ENCODE measurements at regions of chr1 and their contacts with region 1.

Region 1: DNA sequence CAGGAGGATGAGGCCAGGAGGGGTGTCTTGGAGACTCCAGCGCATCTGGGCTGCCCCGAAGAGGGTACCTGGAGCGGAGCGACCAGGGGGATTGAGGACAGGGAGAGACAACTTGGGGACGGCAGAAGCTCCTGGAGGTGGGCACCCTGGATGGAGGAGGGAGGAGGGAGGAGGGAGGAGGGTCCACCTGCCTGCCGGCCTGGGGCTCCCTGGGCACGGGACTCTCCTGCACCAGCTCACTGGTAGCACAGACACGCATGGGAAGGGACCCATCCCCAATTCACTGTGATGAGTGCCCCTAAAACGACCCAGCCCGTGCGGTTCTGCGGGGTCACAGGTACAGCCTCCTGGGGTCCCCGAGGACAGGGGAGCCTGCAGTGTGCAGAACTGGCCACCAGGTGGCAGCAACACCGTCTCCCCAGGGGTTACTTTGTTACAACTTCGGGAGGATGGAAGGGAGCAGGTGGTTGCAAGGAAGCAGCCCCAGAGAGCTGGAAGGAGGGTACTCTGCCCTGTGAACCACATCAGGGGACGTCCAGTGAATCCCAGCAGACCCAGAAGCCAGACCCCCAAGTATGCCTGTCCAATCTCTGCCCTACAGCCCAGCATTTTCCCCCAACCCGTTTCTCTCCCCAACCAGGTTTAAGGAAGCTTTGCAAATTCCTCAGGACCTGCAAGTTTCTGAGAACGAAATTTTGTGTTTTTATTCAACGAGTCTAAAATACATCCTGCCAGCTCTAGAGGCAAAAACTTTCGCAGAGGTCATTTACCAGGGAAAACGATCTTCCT is 482.4 kb downstream of the NPHP4 start:
- H3K4me3 ChIP-seq: no peak overlapping the region
- H3K27ac ChIP-seq: no peak overlapping the region
- H3K4me1 ChIP-seq: no peaks in the 10 kb centered on the region
- CTCF ChIP-seq: peak; percentile 70

Region 2: GRCh38 chr1:5329068-5329739 is 180.7 kb before region 1 on chr1:
- CTCF ChIA-PET with region 1: no interaction called
- POLR2A ChIA-PET with region 1: no interaction called
- H3K4me3 ChIP-seq: no peak overlapping the region
- H3K27ac ChIP-seq: no peak overlapping the region
- H3K4me1 ChIP-seq: no peaks in the 10 kb centered on the region
- CTCF ChIP-seq: no peak

Region 3: DNA sequence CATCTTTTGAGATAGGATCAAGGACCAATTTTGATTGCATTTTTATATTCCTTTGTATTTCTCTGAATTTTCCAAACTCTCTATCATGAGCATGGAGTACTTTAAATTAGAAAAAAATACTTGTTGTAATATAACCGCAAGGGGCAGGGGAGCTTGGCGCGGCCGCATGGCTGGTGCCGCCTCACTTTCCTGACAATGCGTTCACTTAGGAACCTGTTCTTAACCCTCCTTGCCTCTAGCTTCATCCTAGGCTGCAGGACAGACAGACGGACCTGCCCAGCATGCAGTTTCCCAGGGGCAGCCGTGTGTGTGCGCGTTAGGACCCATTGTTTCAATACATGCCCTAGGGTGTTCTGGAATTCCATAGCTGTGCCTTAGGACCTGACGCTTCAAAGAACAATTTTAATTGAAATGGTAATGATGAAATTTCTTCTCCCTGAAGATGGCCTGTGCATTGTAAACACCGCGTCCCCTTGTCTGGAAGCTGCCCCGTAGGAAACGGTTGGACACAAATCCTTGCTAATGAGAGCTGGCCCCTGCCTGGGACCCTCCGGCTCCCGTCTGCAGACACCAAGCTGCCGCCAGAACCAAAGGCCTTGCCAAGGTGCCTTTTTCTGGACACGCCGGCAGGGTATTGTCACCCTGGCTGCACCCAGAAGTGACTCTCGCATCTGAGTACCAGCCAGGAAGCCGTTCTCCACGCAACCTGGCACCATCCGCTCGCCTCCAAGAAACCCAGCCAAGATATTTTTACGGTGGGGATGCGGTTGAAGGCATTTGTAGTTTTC is 15.9 kb after region 1 on chr1:
- CTCF ChIA-PET with region 1: interaction called, 10 read pairs
- POLR2A ChIA-PET with region 1: no interaction called
- H3K4me3 ChIP-seq: no peak overlapping the region
- H3K27ac ChIP-seq: no peak overlapping the region
- H3K4me1 ChIP-seq: no peaks in the 10 kb centered on the region
- CTCF ChIP-seq: no peak

Region 4: GRCh38 chr1:5745776-5746610 is 236.1 kb after region 1 on chr1:
- CTCF ChIA-PET with region 1: interaction called, 32 read pairs
- POLR2A ChIA-PET with region 1: no interaction called
- H3K4me3 ChIP-seq: no peak overlapping the region
- H3K27ac ChIP-seq: no peak overlapping the region
- H3K4me1 ChIP-seq: no peaks in the 10 kb centered on the region
- CTCF ChIP-seq: peak; percentile 92

Measured in HEK293 (cell line).